HepG2 (cell line): ENCODE measurements at regions of chr11 and their contacts with region 1.

Region 1: DNA sequence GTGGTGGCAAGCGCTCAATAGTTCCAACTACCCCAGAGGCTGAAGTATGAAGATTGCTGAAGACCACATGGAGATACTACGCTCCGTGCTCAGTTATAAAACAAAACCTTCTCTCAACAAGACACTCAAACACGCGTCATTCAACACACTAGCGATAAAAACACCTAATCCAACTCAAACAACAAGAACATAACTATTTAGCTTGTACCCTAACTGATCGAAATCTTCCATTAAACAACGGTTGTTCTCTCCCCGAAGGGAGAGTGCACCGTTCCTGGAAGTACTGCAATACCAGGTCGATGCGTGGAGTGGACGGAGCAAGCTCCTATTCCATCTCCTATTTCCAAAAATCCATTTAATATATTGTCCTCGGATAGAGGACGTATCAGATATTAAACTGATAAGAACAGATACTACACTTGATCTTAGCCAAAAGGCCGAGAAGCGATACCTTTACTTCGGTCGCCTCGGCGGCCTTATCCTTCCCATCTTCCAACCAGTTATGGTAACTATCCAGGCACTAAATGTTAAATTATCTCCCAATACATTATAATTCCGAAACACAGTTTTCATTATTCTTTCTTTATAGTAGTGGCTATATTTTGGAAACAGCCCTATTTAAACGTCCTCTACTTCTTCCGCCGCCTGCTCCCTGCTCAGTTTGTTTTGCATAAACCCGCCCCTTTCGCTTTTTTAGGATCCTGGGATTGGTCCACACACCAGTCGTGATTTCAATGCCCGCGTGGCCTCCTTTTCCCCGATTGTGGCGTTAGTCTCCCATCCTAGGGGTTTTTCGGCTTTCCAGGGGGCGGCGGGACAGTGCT is 2.2 kb upstream of the WDR74 start:
- DNase-seq: peak; percentile 98
- ATAC-seq: peak; percentile 78
- H3K4me3 ChIP-seq: peak overlapping the region; percentile 85 to 100 (median 97)
- H3K27ac ChIP-seq: peak overlapping the region; percentile 98
- H3K4me1 ChIP-seq: peaks cover 43% of the 10 kb centered on the region
- H3K27me3 ChIP-seq: no peaks in the 10 kb centered on the region; a peak in 1 of 5 replicates
- CTCF ChIP-seq: peak; percentile 39
- EP300 ChIP-seq: peak in 1 of 2 experiments; percentile 74; a peak in 2 of 4 replicates
- POLR2A ChIP-seq: peak; percentile 99 to 100
- RAD21 ChIP-seq: peak; percentile 82

Region 2: DNA sequence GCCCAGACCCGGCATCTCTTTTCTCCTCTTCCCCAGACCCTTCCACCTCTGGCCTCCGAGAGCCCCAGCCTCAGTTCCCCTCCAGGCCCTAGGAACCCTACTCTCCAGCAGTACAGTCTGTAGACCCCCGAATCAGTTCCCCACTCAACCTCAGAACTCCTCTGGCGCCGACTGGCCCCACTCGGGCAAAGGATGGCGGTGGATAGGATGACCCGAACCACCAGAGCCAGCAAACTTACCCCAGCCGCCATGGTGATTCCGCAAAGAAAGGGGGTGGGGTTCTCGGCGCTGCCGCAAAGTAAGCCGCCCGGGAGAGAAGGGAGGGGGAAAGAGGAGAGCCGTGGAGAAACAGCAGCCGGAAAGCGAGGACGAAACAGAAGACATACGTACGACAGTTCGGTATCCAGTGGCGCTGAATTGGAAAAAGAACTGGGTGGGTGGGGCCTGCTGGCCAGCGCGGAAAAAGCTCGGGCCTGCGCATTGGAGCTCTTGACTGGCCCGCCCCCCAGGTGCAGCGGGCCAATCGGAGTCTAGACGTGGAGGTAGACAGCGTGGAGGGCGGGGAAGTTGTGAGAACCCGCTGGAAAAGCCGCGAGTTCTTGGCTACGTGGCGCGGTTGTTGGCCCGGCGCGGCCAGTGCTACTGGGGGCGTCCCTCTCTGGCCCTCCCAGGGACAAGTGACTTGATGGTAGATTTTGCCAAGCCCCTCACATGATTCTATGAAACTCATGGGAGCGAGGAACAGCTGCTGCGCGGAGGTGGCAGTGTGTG is 267.8 kb before region 1 on chr11 and contains the start of gene EEF1G:
- CTCF ChIA-PET with region 1: no interaction called
- POLR2A ChIA-PET with region 1: interaction called, 10 read pairs
- in situ Hi-C with region 1: no loop called
- intact Hi-C with region 1: no loop called
- DNase-seq: peak; percentile 99
- ATAC-seq: peak; percentile 93
- H3K4me3 ChIP-seq: peak within 1 kb of the TSS; percentile 80 to 96 (median 95)
- H3K27ac ChIP-seq: peak within 1 kb of the TSS; percentile 85
- H3K4me1 ChIP-seq: peaks cover 63% of the 10 kb centered on the region
- H3K27me3 ChIP-seq: no peaks in the 10 kb centered on the region; a peak in 1 of 5 replicates
- CTCF ChIP-seq: no peak; the same call in 1 of the 2 replicates
- EP300 ChIP-seq: no peak
- POLR2A ChIP-seq: peak; percentile 89 to 91
- RAD21 ChIP-seq: no peak
- total RNA-seq, gene EEF1G: 1,787 and 2,092 TPM in 2 replicates

Region 3: GRCh38 chr11:62665075-62665598 is 176.4 kb before region 1 on chr11 and contains the starts of genes C11orf98 and CSKMT:
- CTCF ChIA-PET with region 1: no interaction called
- POLR2A ChIA-PET with region 1: interaction called, 29 read pairs
- in situ Hi-C with region 1: no loop called
- intact Hi-C with region 1: no loop called
- DNase-seq: peak; percentile 85
- ATAC-seq: peak; percentile 86
- H3K4me3 ChIP-seq: peak within 1 kb of the TSS; percentile 69 to 97 (median 91)
- H3K27ac ChIP-seq: peak within 1 kb of the TSS; percentile 84
- H3K4me1 ChIP-seq: peaks cover 47% of the 10 kb centered on the region
- H3K27me3 ChIP-seq: no peaks in the 10 kb centered on the region; a peak in 1 of 5 replicates
- CTCF ChIP-seq: no peak
- EP300 ChIP-seq: peak in 1 of 2 experiments; percentile 11; a peak in 2 of 4 replicates
- POLR2A ChIP-seq: peak; percentile 97 to 99
- RAD21 ChIP-seq: peak; percentile 55
- total RNA-seq, gene C11orf98: 91.8 and 109 TPM in 2 replicates
- total RNA-seq, gene CSKMT: 9.9 and 31.8 TPM in 2 replicates

Region 4: GRCh38 chr11:62753736-62754603 is 87.6 kb before region 1 on chr11 and contains the start of gene ZBTB3:
- CTCF ChIA-PET with region 1: no interaction called
- POLR2A ChIA-PET with region 1: interaction called, 97 read pairs
- in situ Hi-C with region 1: no loop called
- intact Hi-C with region 1: no loop called
- DNase-seq: peak; percentile 99
- ATAC-seq: peak; percentile 96
- H3K4me3 ChIP-seq: peak within 1 kb of the TSS; percentile 55 to 86 (median 81)
- H3K27ac ChIP-seq: peak within 1 kb of the TSS; percentile 75
- H3K4me1 ChIP-seq: peaks cover 35% of the 10 kb centered on the region
- H3K27me3 ChIP-seq: no peaks in the 10 kb centered on the region
- CTCF ChIP-seq: peak; percentile 29; the same call in 1 of the 2 replicates
- EP300 ChIP-seq: no peak
- POLR2A ChIP-seq: peak; percentile 83 to 88
- RAD21 ChIP-seq: no peak; the same call in 1 of the 2 replicates
- total RNA-seq, gene ZBTB3: 4.0 and 5.2 TPM in 2 replicates

Region 5: GRCh38 chr11:62805076-62805892 is 36.3 kb before region 1 on chr11 and contains the start of gene NXF1:
- CTCF ChIA-PET with region 1: no interaction called
- POLR2A ChIA-PET with region 1: interaction called, 53 read pairs
- in situ Hi-C with region 1: no loop called
- intact Hi-C with region 1: no loop called
- DNase-seq: peak; percentile 85
- ATAC-seq: peak; percentile 85
- H3K4me3 ChIP-seq: peak within 1 kb of the TSS; percentile 86 to 97 (median 92)
- H3K27ac ChIP-seq: peak within 1 kb of the TSS; percentile 58
- H3K4me1 ChIP-seq: peaks cover 23% of the 10 kb centered on the region
- H3K27me3 ChIP-seq: no peaks in the 10 kb centered on the region; a peak in 1 of 5 replicates
- CTCF ChIP-seq: no peak; the same call in 1 of the 2 replicates
- EP300 ChIP-seq: no peak
- POLR2A ChIP-seq: peak; percentile 100
- RAD21 ChIP-seq: peak; percentile 66; the same call in 1 of the 2 replicates
- total RNA-seq, gene NXF1: 26.2 and 30.9 TPM in 2 replicates

Region 6: GRCh38 chr11:62875698-62876478 is 34.3 kb after region 1 on chr11:
- CTCF ChIA-PET with region 1: no interaction called
- POLR2A ChIA-PET with region 1: interaction called, 90 read pairs
- in situ Hi-C with region 1: no loop called
- intact Hi-C with region 1: no loop called
- DNase-seq: peak; percentile 56
- ATAC-seq: peak; percentile 46
- H3K4me3 ChIP-seq: no peak overlapping the region
- H3K27ac ChIP-seq: peak overlapping the region; percentile 23
- H3K4me1 ChIP-seq: peaks cover 29% of the 10 kb centered on the region
- H3K27me3 ChIP-seq: no peaks in the 10 kb centered on the region
- CTCF ChIP-seq: no peak
- EP300 ChIP-seq: no peak
- POLR2A ChIP-seq: no peak
- RAD21 ChIP-seq: no peak